CD8-positive, alpha-beta T cell (primary cell): ENCODE measurements at regions of chr2 and their contacts with region 1.

Region 1: DNA sequence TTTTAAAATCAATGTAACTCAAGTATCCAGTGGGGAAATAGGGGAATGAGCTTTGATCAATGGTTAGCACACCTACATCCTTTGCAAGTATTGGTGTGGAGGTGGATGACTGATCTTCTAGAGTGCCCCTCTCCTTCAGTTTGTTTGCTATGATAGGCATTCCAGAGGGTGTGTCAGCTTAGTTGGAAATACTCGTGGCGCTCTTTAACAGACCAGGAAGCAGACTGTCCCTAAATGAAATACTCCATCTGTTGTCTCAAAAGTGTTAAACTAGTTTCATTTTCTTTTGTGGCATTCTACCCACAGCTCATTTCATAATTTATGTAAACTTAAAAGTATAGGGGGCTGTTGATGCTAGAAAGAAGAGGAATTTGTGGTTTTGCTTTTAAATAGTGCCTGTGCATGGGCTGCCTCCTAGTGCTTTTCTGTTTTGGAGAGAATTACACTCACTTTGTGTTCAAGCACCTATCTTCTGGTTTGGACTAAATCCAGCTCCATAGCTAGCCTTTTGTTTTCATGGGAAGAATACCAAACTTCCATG is 66.2 kb downstream of the STAT1 start:
- DNase-seq: peak in 3 of 9 experiments; percentile 43 to 76 (median 53)
- ATAC-seq: peak; percentile 91
- H3K4me3 ChIP-seq: no peak overlapping the region
- H3K4me3 Mint-ChIP-seq: peak overlapping the region; percentile 73
- H3K27ac ChIP-seq: peak overlapping the region; percentile 26 to 34
- H3K27ac Mint-ChIP-seq: peak overlapping the region; percentile 98
- H3K4me1 ChIP-seq: peaks cover 19% of the 10 kb centered on the region
- H3K4me1 Mint-ChIP-seq: peaks cover 31% of the 10 kb centered on the region
- H3K27me3 ChIP-seq: no peaks in the 10 kb centered on the region
- H3K27me3 Mint-ChIP-seq: no peaks in the 10 kb centered on the region
- CTCF ChIP-seq: peak; percentile 45

Region 2: GRCh38 chr2:190432567-190433231 is 515.1 kb before region 1 on chr2:
- CTCF ChIA-PET with region 1: no interaction called
- POLR2A ChIA-PET with region 1: no interaction called
- intact Hi-C with region 1: no loop called
- DNase-seq: no peak
- ATAC-seq: no peak
- H3K4me3 ChIP-seq: no peak overlapping the region
- H3K4me3 Mint-ChIP-seq: no peak overlapping the region
- H3K27ac ChIP-seq: no peak overlapping the region
- H3K27ac Mint-ChIP-seq: peak overlapping the region; percentile 16
- H3K4me1 ChIP-seq: peaks cover 23% of the 10 kb centered on the region
- H3K4me1 Mint-ChIP-seq: peaks cover 69% of the 10 kb centered on the region
- H3K27me3 ChIP-seq: no peaks in the 10 kb centered on the region
- H3K27me3 Mint-ChIP-seq: no peaks in the 10 kb centered on the region
- CTCF ChIP-seq: no peak

Region 3: GRCh38 chr2:190641469-190641868 is 306.3 kb before region 1 on chr2:
- CTCF ChIA-PET with region 1: no interaction called
- POLR2A ChIA-PET with region 1: no interaction called
- intact Hi-C with region 1: loop called in 1 of 2 experiments (anchors 5 kb)
- DNase-seq: no peak
- ATAC-seq: no peak
- H3K4me3 ChIP-seq: no peak overlapping the region
- H3K4me3 Mint-ChIP-seq: no peak overlapping the region
- H3K27ac ChIP-seq: no peak overlapping the region
- H3K27ac Mint-ChIP-seq: no peak overlapping the region
- H3K4me1 ChIP-seq: no peaks in the 10 kb centered on the region
- H3K4me1 Mint-ChIP-seq: peaks cover 9% of the 10 kb centered on the region
- H3K27me3 ChIP-seq: no peaks in the 10 kb centered on the region
- H3K27me3 Mint-ChIP-seq: no peaks in the 10 kb centered on the region
- CTCF ChIP-seq: no peak

Region 4: GRCh38 chr2:190781604-190782198 is 166.1 kb before region 1 on chr2:
- CTCF ChIA-PET with region 1: interaction called, 16 read pairs
- POLR2A ChIA-PET with region 1: no interaction called
- intact Hi-C with region 1: loop called (anchors 1 to 5 kb)
- DNase-seq: peak in 8 of 9 experiments; percentile 6 to 74 (median 48)
- ATAC-seq: peak; percentile 63
- H3K4me3 ChIP-seq: no peak overlapping the region
- H3K4me3 Mint-ChIP-seq: no peak overlapping the region
- H3K27ac ChIP-seq: no peak overlapping the region
- H3K27ac Mint-ChIP-seq: no peak overlapping the region
- H3K4me1 ChIP-seq: no peaks in the 10 kb centered on the region
- H3K4me1 Mint-ChIP-seq: peaks cover 3% of the 10 kb centered on the region
- H3K27me3 ChIP-seq: no peaks in the 10 kb centered on the region
- H3K27me3 Mint-ChIP-seq: peaks cover 7% of the 10 kb centered on the region
- CTCF ChIP-seq: peak; percentile 70

Region 5: GRCh38 chr2:190849774-190850173 is 98.0 kb before region 1 on chr2:
- CTCF ChIA-PET with region 1: interaction called, 26 read pairs
- POLR2A ChIA-PET with region 1: interaction called, 3 read pairs
- intact Hi-C with region 1: loop called (anchors 1 kb)
- DNase-seq: no peak
- ATAC-seq: no peak
- H3K4me3 ChIP-seq: no peak overlapping the region
- H3K4me3 Mint-ChIP-seq: no peak overlapping the region
- H3K27ac ChIP-seq: no peak overlapping the region
- H3K27ac Mint-ChIP-seq: no peak overlapping the region
- H3K4me1 ChIP-seq: no peaks in the 10 kb centered on the region
- H3K4me1 Mint-ChIP-seq: peaks cover 2% of the 10 kb centered on the region
- H3K27me3 ChIP-seq: no peaks in the 10 kb centered on the region
- H3K27me3 Mint-ChIP-seq: no peaks in the 10 kb centered on the region
- CTCF ChIP-seq: no peak

Region 6: DNA sequence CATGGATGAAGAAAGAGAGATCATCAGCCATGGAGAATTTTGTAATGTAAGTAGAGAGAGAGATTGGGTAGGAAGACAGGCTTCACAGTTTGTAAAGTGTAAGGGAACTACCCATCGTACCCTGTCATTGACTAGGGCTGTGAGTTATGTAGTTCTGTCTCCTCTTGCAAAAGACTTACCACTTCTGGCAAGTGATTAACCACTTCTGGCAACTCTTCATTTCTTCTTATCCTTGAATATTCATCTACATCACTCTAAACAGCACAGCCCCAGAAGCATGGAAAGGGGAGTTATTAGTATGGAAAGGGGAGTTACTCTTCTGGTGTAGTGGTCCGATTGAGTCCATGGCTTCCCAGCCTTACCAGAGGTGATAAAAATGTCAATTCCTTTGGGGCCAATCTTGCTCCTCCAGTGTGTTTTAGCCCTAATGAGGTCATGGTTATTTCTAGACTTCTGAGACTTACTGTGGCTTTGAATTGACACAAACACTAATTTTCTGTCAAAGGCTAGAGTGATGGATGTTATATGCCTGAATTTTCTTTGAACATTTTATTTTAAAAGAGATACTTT is 14.2 kb after region 1 on chr2:
- CTCF ChIA-PET with region 1: interaction called, 8 read pairs
- POLR2A ChIA-PET with region 1: interaction called, 5 read pairs
- intact Hi-C with region 1: loop called in 1 of 2 experiments (anchors 2 kb)
- DNase-seq: no peak
- ATAC-seq: peak; percentile 20
- H3K4me3 ChIP-seq: no peak overlapping the region
- H3K4me3 Mint-ChIP-seq: no peak overlapping the region
- H3K27ac ChIP-seq: peak overlapping the region in 1 of 2 experiments; percentile 14
- H3K27ac Mint-ChIP-seq: peak overlapping the region; percentile 63
- H3K4me1 ChIP-seq: no peaks in the 10 kb centered on the region
- H3K4me1 Mint-ChIP-seq: peaks cover 39% of the 10 kb centered on the region
- H3K27me3 ChIP-seq: no peaks in the 10 kb centered on the region
- H3K27me3 Mint-ChIP-seq: no peaks in the 10 kb centered on the region
- CTCF ChIP-seq: no peak

Region 7: GRCh38 chr2:191115391-191115790 is 167.6 kb after region 1 on chr2:
- CTCF ChIA-PET with region 1: no interaction called
- POLR2A ChIA-PET with region 1: no interaction called
- intact Hi-C with region 1: no loop called
- DNase-seq: peak in 7 of 9 experiments; percentile 5 to 87 (median 55)
- ATAC-seq: peak; percentile 63
- H3K4me3 ChIP-seq: no peak overlapping the region
- H3K4me3 Mint-ChIP-seq: no peak overlapping the region
- H3K27ac ChIP-seq: peak overlapping the region; percentile 47 to 96
- H3K27ac Mint-ChIP-seq: peak overlapping the region; percentile 96
- H3K4me1 ChIP-seq: peaks cover 31% of the 10 kb centered on the region
- H3K4me1 Mint-ChIP-seq: peaks cover 74% of the 10 kb centered on the region
- H3K27me3 ChIP-seq: no peaks in the 10 kb centered on the region
- H3K27me3 Mint-ChIP-seq: no peaks in the 10 kb centered on the region
- CTCF ChIP-seq: no peak